ENCODE measurements at regions of chr6 and their contacts with region 1.

Region 1: DNA sequence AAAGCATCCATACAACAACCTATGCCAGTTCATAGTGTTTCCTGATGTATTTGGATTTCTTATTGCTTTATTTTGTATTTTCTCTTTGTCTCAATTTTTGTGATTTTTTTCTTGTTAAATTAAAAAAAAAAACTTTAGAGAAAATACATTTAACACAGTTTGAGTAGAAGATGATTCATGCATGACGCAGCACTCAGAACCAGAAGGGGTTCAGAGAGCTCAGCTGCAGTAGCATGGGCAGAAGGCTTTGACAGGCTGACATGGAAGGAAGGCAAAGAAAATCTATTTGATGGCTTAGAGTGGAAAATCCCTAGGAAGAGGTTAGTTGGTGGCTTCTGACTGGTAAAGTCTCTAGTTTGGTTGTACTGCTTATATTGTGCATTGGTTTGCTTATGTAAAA is 207.2 kb upstream of the STXBP5 start:
- DNase-seq: no peak
- H3K4me3 ChIP-seq: no peak overlapping the region
- H3K27ac ChIP-seq: no peak overlapping the region
- H3K4me1 ChIP-seq: no peaks in the 10 kb centered on the region
- H3K27me3 ChIP-seq: no peaks in the 10 kb centered on the region
- CTCF ChIP-seq: no peak
- POLR2A ChIP-seq: no peak

Region 2: DNA sequence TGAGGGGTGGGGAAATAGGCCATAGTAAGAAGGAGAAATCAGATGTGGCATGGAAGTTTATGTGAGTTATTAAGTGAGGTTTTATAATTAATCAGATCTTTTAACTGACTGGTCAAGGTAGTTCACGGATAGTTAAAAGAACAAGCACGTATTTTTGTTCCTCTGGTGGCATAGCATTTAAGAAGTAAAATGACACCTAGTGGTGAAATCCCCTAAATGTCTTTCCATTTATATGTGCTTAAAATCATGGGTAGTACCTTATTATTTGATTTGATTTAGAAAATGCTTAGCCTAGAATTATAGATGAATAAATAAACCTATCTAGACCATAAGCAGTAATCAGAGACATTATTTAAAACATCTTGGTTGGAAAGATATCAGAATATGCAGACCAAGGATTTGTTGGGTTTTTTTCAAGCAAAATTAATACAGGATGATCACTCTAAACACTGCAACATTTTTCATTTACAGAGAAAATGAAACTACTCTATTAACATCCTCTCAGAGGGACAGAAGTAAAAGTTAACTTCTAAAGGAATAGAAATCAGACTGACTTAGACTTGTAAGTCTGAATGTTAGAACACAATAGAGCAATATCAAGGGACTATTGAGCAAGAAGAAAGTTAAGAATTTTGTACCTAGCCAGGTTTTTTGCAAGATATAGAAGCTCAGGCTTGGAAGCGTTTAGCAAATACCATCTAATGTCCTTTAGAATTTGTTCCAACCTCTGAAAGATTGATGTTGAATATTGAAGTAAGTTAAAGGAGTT is 288.2 kb after region 1 on chr6:
- intact Hi-C with region 1: no loop called
- DNase-seq: no peak
- H3K4me3 ChIP-seq: no peak overlapping the region
- H3K27ac ChIP-seq: peak overlapping the region in 1 of 2 donors; percentile 57
- H3K4me1 ChIP-seq: no peaks in the 10 kb centered on the region
- H3K27me3 ChIP-seq: no peaks in the 10 kb centered on the region
- CTCF ChIP-seq: peak in 2 of 3 donors; percentile 47 to 50
- POLR2A ChIP-seq: no peak

Region 3: GRCh38 chr6:147486683-147487082 is 489.6 kb after region 1 on chr6:
- intact Hi-C with region 1: loop called (anchors 5 kb)
- DNase-seq: no peak
- H3K4me3 ChIP-seq: no peak overlapping the region
- H3K27ac ChIP-seq: no peak overlapping the region
- H3K4me1 ChIP-seq: no peaks in the 10 kb centered on the region
- H3K27me3 ChIP-seq: no peaks in the 10 kb centered on the region
- CTCF ChIP-seq: no peak
- POLR2A ChIP-seq: no peak